ENCODE measurements at regions of chr1 and their contacts with region 1.

Region 1: GRCh38 chr1:88998716-88999115 is 6.3 kb upstream of the KYAT3 start:
- DNase-seq: peak; percentile 87
- H3K4me3 ChIP-seq: no peak overlapping the region
- H3K27ac ChIP-seq: no peak overlapping the region
- H3K4me1 ChIP-seq: peaks cover 4% of the 10 kb centered on the region
- H3K27me3 ChIP-seq: no peaks in the 10 kb centered on the region
- CTCF ChIP-seq: peak; percentile 52

Region 2: GRCh38 chr1:89085781-89086180 is 87.1 kb after region 1 on chr1:
- CTCF ChIA-PET with region 1: no interaction called
- POLR2A ChIA-PET with region 1: interaction called, 27 read pairs
- intact Hi-C with region 1: no loop called
- DNase-seq: peak; percentile 78
- H3K4me3 ChIP-seq: no peak overlapping the region
- H3K27ac ChIP-seq: no peak overlapping the region
- H3K4me1 ChIP-seq: no peaks in the 10 kb centered on the region
- H3K27me3 ChIP-seq: no peaks in the 10 kb centered on the region
- CTCF ChIP-seq: peak; percentile 87

Region 3: GRCh38 chr1:89358287-89358893 is 359.7 kb after region 1 on chr1:
- CTCF ChIA-PET with region 1: no interaction called
- POLR2A ChIA-PET with region 1: no interaction called
- intact Hi-C with region 1: loop called (anchors 2 kb)
- DNase-seq: peak; percentile 80
- H3K4me3 ChIP-seq: no peak overlapping the region
- H3K27ac ChIP-seq: no peak overlapping the region
- H3K4me1 ChIP-seq: no peaks in the 10 kb centered on the region
- H3K27me3 ChIP-seq: no peaks in the 10 kb centered on the region
- CTCF ChIP-seq: peak; percentile 85

Region 4: GRCh38 chr1:89454845-89455521 is 456.3 kb after region 1 on chr1:
- CTCF ChIA-PET with region 1: no interaction called
- POLR2A ChIA-PET with region 1: no interaction called
- intact Hi-C with region 1: loop called (anchors 2 kb)
- DNase-seq: peak; percentile 80
- H3K4me3 ChIP-seq: no peak overlapping the region
- H3K27ac ChIP-seq: no peak overlapping the region
- H3K4me1 ChIP-seq: peaks cover 8% of the 10 kb centered on the region
- H3K27me3 ChIP-seq: no peaks in the 10 kb centered on the region
- CTCF ChIP-seq: peak; percentile 77

Region 5: DNA sequence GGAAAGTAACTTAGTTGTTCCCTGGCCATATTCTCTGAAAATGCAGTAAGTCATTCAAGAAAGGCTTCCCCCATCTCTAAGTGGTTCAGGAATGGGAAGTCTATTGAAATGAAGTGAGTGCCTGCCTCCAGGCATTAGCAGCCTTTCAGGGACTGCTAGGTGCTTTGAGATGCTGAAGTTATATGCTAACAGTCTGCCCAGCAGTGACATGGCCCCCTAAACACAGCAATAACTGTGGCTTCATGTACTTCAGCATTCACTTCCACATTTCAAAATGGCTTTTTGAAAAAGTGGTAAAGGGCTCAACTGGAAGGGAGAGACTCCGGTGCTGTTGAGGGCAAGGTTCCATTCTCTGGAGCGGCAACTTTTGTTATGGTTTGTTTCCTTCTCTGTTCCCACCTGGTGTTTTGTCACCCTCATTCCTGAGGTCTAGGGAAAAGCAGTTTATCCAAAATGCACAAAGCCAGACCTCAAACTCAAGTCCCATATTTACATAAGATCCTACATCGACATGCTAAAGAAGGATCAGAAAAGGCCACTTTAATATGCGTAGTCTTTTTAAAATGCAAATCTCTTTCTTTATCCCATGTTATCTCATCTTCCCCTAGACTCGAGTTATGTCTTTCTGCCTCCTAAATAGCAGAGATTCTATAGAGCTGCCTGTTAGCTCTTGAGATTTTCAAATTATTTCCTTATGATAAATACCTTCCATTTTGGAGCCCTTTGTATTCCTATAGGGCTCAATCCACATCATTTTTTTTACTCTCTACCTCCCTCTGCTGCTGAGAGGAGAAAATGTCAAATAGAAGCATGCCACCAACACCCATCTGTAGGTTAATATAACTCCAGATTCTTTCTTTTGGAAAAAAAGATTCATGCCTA is 600.0 kb after region 1 on chr1:
- CTCF ChIA-PET with region 1: no interaction called
- POLR2A ChIA-PET with region 1: no interaction called
- intact Hi-C with region 1: loop called (anchors 10 kb)
- DNase-seq: peak; percentile 68
- H3K4me3 ChIP-seq: no peak overlapping the region
- H3K27ac ChIP-seq: no peak overlapping the region
- H3K4me1 ChIP-seq: peaks cover 4% of the 10 kb centered on the region
- H3K27me3 ChIP-seq: no peaks in the 10 kb centered on the region
- CTCF ChIP-seq: peak; percentile 75

Region 6: GRCh38 chr1:89622895-89623294 is 624.2 kb after region 1 on chr1:
- CTCF ChIA-PET with region 1: interaction called, 13 read pairs
- POLR2A ChIA-PET with region 1: no interaction called
- intact Hi-C with region 1: no loop called
- DNase-seq: no peak
- H3K4me3 ChIP-seq: no peak overlapping the region
- H3K27ac ChIP-seq: no peak overlapping the region
- H3K4me1 ChIP-seq: no peaks in the 10 kb centered on the region
- H3K27me3 ChIP-seq: no peaks in the 10 kb centered on the region
- CTCF ChIP-seq: no peak

Region 7: GRCh38 chr1:89762779-89763648 is 764.3 kb after region 1 on chr1:
- CTCF ChIA-PET with region 1: no interaction called
- POLR2A ChIA-PET with region 1: no interaction called
- intact Hi-C with region 1: loop called (anchors 5 kb)
- DNase-seq: peak; percentile 96
- H3K4me3 ChIP-seq: peak overlapping the region; percentile 47
- H3K27ac ChIP-seq: no peak overlapping the region
- H3K4me1 ChIP-seq: peaks cover 25% of the 10 kb centered on the region
- H3K27me3 ChIP-seq: no peaks in the 10 kb centered on the region
- CTCF ChIP-seq: peak; percentile 99